Natural killer cell (primary cell): ENCODE measurements at regions of chr17 and their contacts with region 1.

Region 1: DNA sequence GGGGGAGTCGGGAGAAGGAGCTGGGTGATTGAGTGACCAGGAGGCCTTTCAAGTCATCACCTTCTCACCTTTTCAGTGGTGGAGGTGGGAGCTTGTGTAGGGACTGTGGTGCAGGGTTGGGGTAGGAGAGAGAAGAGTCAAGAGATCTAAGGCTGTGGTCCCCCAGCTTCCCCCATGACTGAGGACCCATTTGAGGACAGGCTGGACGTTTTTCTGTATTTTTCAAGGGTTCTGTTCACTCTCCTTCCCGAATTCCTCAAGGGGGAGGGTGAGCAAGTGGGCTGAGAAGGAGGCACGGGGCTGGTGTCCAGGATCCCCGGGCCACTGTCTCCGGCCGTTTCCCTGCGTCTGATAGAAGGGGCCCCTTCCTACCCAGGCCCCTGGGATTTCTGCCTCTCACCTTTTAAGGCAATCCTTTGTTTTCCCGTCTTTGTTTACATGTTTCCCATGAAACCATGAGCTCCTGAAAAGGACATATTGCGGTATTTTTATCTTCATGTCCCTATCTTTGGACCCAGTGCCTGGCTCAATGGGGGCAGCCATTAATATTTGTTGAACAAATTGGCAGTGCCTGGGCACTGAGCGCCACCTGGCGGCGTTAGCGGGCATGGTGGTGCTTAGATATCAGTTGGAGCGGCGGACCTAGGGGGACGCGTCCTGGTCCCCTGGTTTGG is 9.2 kb upstream of the CD300A start:
- DNase-seq: peak; percentile 79 to 87
- ATAC-seq: peak; percentile 68 to 75 (median 68)
- H3K4me3 ChIP-seq: no peak overlapping the region
- H3K4me3 Mint-ChIP-seq: peak overlapping the region; percentile 53
- H3K27ac ChIP-seq: no peak overlapping the region
- H3K27ac Mint-ChIP-seq: peak overlapping the region in 1 of 2 donors; percentile 21
- H3K4me1 ChIP-seq: peaks cover 74% of the 10 kb centered on the region
- H3K4me1 Mint-ChIP-seq: peaks cover 32 to 56% of the 10 kb centered on the region in 2 donors
- H3K27me3 ChIP-seq: peaks cover 2% of the 10 kb centered on the region
- H3K27me3 Mint-ChIP-seq: no peaks in the 10 kb centered on the region
- CTCF ChIP-seq: peak; percentile 91

Region 2: GRCh38 chr17:74203439-74204240 is 253.6 kb before region 1 on chr17 and contains the start of gene RPL38:
- intact Hi-C with region 1: loop called (anchors 2 kb)
- DNase-seq: peak; percentile 93 to 98
- ATAC-seq: peak; percentile 89 to 98 (median 94)
- H3K4me3 ChIP-seq: peak within 1 kb of the TSS; percentile 91
- H3K4me3 Mint-ChIP-seq: peak within 1 kb of the TSS; percentile 98
- H3K27ac ChIP-seq: peak within 1 kb of the TSS; percentile 75
- H3K27ac Mint-ChIP-seq: peak within 1 kb of the TSS; percentile 90 to 95
- H3K4me1 ChIP-seq: peaks cover 45% of the 10 kb centered on the region
- H3K4me1 Mint-ChIP-seq: peaks cover 32 to 46% of the 10 kb centered on the region in 2 donors
- H3K27me3 ChIP-seq: peaks cover 4% of the 10 kb centered on the region
- H3K27me3 Mint-ChIP-seq: peaks cover 13 to 14% of the 10 kb centered on the region in 2 donors
- CTCF ChIP-seq: peak; percentile 88
- total RNA-seq, gene RPL38: 560 to 802 (median 759) TPM

Region 3: GRCh38 chr17:74212913-74213791 is 244.1 kb before region 1 on chr17 and contains the start of gene TTYH2:
- intact Hi-C with region 1: loop called (anchors 1 kb)
- DNase-seq: peak; percentile 57 to 84
- ATAC-seq: peak; percentile 75 to 80 (median 79)
- H3K4me3 ChIP-seq: peak within 1 kb of the TSS; percentile 51
- H3K4me3 Mint-ChIP-seq: peak within 1 kb of the TSS; percentile 88
- H3K27ac ChIP-seq: peak within 1 kb of the TSS; percentile 60
- H3K27ac Mint-ChIP-seq: peak within 1 kb of the TSS; percentile 81 to 91
- H3K4me1 ChIP-seq: peaks cover 55% of the 10 kb centered on the region
- H3K4me1 Mint-ChIP-seq: peaks cover 34 to 36% of the 10 kb centered on the region in 2 donors
- H3K27me3 ChIP-seq: no peaks in the 10 kb centered on the region
- H3K27me3 Mint-ChIP-seq: no peaks in the 10 kb centered on the region
- CTCF ChIP-seq: no peak
- total RNA-seq, gene TTYH2: 4.3 to 7.9 (median 4.8) TPM

Region 4: DNA sequence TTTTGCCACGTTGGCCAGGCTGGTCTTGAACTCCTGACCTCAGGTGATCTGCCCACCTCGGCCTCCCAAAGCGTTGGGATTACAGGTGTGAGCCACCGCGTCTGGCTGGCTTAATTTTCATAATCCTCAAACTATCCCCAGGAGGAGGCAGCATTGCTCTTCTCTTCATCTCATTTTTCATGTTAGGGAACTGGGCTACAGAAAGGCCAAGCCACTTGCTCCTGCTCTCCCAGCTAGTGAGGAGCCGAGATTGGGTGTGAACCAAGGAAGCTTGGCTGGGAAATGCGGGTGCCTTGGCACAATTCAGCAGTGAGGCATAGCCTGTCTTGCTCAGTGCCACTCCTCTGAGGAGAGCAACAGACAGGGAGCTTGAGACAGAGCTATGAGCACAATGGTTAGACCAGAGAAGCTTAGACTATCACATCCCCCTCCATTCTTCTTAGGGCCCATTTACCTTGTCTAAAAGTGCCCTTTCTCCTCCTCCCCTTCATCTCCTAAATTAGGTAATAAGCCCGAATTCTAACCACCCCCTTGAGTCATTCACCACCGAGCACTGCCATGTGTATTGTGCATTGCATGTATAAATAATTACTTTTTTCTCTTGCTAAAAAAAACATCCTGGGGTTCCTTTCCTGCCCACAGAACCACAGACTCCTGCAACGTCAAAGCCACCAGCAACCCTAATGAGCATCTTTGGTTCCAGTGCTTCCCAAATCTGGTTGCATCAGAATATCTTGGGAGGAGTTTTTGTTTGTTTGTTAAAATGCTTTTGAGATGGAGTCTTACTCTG is 151.2 kb before region 1 on chr17:
- intact Hi-C with region 1: loop called (anchors 5 kb)
- DNase-seq: no peak
- ATAC-seq: no peak
- H3K4me3 ChIP-seq: no peak overlapping the region
- H3K4me3 Mint-ChIP-seq: no peak overlapping the region
- H3K27ac ChIP-seq: no peak overlapping the region
- H3K27ac Mint-ChIP-seq: no peak overlapping the region
- H3K4me1 ChIP-seq: peaks cover 8% of the 10 kb centered on the region
- H3K4me1 Mint-ChIP-seq: peaks cover 6 to 11% of the 10 kb centered on the region in 2 donors
- H3K27me3 ChIP-seq: no peaks in the 10 kb centered on the region
- H3K27me3 Mint-ChIP-seq: no peaks in the 10 kb centered on the region
- CTCF ChIP-seq: no peak

Region 5: DNA sequence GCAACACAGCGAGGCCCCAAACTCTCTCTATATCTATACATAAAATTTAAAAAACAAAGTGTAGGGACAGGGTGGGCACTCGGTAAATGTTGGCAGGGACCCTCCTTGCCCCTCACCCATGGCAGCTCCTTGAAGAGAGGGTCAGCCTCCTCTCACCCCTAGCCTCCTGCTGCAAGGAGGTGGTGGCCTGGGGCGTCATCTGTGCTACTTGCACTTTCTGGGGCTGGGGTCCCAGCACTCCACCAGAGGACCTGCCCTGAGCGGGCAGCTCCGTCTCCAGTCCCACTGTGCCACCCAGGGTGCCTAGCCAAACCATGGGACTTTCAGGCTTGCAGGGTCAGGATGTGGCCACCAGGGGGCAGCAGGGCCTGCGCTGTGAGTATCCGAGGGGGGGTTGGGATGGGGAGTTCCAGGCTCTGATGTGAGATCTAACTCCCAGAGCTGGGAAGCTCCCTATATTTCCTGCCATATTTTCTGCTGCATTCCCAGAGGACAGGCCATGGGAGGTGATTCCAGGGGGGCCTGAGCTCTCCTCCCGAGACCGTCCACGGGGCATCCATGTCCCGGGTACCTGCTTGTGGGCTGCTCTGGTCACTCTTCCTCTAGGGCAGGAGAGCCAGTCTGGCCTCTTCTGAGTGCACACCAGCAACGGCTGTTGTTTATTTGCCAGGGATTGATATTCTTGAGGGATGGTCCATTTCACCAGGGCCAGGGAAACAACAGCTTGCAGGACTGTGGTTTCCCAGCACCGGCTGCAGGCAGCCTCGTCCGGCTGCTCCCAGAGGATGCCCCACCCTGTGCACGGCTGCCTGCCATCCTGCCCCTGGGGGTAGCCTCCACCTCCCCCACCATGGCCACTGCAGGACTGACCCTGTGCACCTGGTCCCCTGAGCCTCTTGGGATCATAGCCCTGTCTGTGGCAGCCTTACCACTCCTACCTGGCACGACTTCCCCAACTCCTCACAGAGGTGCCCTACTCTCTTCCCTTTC is 88.9 kb before region 1 on chr17:
- intact Hi-C with region 1: loop called (anchors 1 kb)
- DNase-seq: peak; percentile 78 to 87
- ATAC-seq: peak; percentile 76 to 90 (median 90)
- H3K4me3 ChIP-seq: no peak overlapping the region
- H3K4me3 Mint-ChIP-seq: peak overlapping the region; percentile 71
- H3K27ac ChIP-seq: no peak overlapping the region
- H3K27ac Mint-ChIP-seq: peak overlapping the region in 1 of 2 donors; percentile 75
- H3K4me1 ChIP-seq: peaks cover 20% of the 10 kb centered on the region
- H3K4me1 Mint-ChIP-seq: peaks cover 17 to 18% of the 10 kb centered on the region in 2 donors
- H3K27me3 ChIP-seq: peaks cover 2% of the 10 kb centered on the region
- H3K27me3 Mint-ChIP-seq: peaks cover 0 to 6% of the 10 kb centered on the region in 2 donors
- CTCF ChIP-seq: peak; percentile 93

Region 6: GRCh38 chr17:74379495-74380085 is 77.7 kb before region 1 on chr17:
- intact Hi-C with region 1: loop called (anchors 1 kb)
- DNase-seq: peak; percentile 92
- ATAC-seq: peak; percentile 82 to 90 (median 87)
- H3K4me3 ChIP-seq: no peak overlapping the region
- H3K4me3 Mint-ChIP-seq: peak overlapping the region; percentile 40
- H3K27ac ChIP-seq: peak overlapping the region; percentile 51
- H3K27ac Mint-ChIP-seq: peak overlapping the region; percentile 78 to 87
- H3K4me1 ChIP-seq: peaks cover 31% of the 10 kb centered on the region
- H3K4me1 Mint-ChIP-seq: peaks cover 30 to 32% of the 10 kb centered on the region in 2 donors
- H3K27me3 ChIP-seq: no peaks in the 10 kb centered on the region
- H3K27me3 Mint-ChIP-seq: no peaks in the 10 kb centered on the region
- CTCF ChIP-seq: peak; percentile 90

Region 7: DNA sequence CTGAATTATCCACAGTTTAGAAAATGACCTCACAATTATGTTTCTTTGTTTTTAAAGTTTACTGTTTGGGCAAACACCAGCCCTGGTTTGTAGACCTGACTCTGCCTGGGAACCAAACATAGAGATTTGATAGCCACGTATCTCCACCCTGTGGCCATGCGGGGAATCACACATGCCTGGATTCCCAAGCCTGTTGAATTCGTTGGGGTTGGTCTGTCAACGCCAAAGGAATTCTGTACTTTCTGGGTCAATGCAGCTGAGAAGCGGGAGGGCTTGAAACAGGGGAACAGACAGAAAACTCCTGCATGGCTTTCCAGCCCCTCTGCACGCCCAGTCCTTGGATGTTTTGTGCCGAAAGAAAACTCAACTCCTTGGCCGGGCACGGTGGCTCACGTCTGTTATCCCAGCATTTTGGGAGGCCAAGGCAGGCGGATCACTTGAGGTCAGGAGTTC is 36.1 kb after region 1 on chr17:
- intact Hi-C with region 1: loop called (anchors 1 kb)
- DNase-seq: peak; percentile 63 to 85
- ATAC-seq: peak; percentile 87 to 93 (median 90)
- H3K4me3 ChIP-seq: no peak overlapping the region
- H3K4me3 Mint-ChIP-seq: peak overlapping the region; percentile 68
- H3K27ac ChIP-seq: no peak overlapping the region
- H3K27ac Mint-ChIP-seq: peak overlapping the region; percentile 78 to 88
- H3K4me1 ChIP-seq: peaks cover 35% of the 10 kb centered on the region
- H3K4me1 Mint-ChIP-seq: peaks cover 40 to 66% of the 10 kb centered on the region in 2 donors
- H3K27me3 ChIP-seq: no peaks in the 10 kb centered on the region
- H3K27me3 Mint-ChIP-seq: no peaks in the 10 kb centered on the region
- CTCF ChIP-seq: peak; percentile 86